ENCODE measurements at regions of chr13 and their contacts with region 1.

Region 1: GRCh38 chr13:29707876-29708543 is 112.5 kb upstream of the SLC7A1 start:
- DNase-seq: peak; percentile 57

Region 2: DNA sequence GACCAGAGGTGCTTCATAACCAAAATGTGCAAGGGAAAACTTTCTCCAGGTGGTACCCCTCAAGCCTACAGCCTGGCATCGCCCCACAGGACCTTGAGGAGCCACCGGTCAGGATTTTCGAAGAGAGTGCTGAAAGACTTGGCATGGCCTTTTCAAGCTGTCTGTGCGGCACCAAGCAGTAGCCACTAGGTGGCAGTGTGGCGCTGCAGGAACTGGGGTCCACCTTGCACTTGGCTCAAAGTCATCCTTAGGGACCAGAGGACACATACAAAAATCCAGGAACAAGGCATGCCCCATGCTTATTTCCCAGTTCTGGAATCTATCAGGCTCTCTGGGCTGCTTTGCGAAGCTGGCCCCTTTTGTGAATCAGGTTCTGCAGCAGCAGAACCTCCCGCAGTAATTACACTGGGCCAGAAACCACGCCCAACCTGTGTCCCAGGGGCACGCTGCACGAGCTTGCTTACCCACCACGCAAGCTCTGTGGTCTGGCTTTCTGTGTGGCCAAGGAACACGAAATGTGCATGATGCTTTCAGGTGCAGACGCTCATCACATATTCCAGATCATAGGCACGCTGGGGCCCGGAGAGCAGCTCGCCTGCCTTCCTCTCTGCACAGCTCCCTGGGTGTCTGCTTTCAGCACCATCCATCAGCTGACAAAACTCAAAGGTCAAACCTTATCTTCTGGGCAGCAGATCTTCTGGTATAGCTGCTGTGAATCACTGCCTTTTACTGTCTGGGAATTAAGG is 199.7 kb before region 1 on chr13:
- in situ Hi-C with region 1: loop called (anchors 25 kb)
- DNase-seq: peak; percentile 72

Region 3: GRCh38 chr13:30346153-30346788 is 638.3 kb after region 1 on chr13:
- in situ Hi-C with region 1: no loop called
- DNase-seq: peak; percentile 81